Endothelial cell of umbilical vein (primary cell): ENCODE measurements at regions of chr15 and their contacts with region 1.

Region 1: GRCh38 chr15:70097337-70098169 is at the start of gene TLE3:
- DNase-seq: peak; percentile 99
- H3K4me3 ChIP-seq: peak within 1 kb of the TSS; percentile 88 to 98 (median 89)
- H3K27ac ChIP-seq: peak within 1 kb of the TSS; percentile 85
- H3K4me1 ChIP-seq: peaks cover 53% of the 10 kb centered on the region
- H3K27me3 ChIP-seq: no peaks in the 10 kb centered on the region
- CTCF ChIP-seq: peak in 1 of 2 donors; percentile 39
- POLR2A ChIP-seq: peak; percentile 88
- total RNA-seq, gene TLE3: 53.8 and 56.9 TPM in 2 replicates

Region 2: GRCh38 chr15:69462493-69463181 is 634.9 kb before region 1 on chr15:
- CTCF ChIA-PET with region 1: interaction called, 3 read pairs
- POLR2A ChIA-PET with region 1: no interaction called
- dilution Hi-C with region 1: no loop called
- intact Hi-C with region 1: loop called (anchors 5 kb)
- DNase-seq: peak; percentile 99
- H3K4me3 ChIP-seq: peak overlapping the region; percentile 1 to 38 (median 31)
- H3K27ac ChIP-seq: peak overlapping the region; percentile 65
- H3K4me1 ChIP-seq: peaks cover 8% of the 10 kb centered on the region
- H3K27me3 ChIP-seq: no peaks in the 10 kb centered on the region
- CTCF ChIP-seq: peak; percentile 94 to 97
- POLR2A ChIP-seq: peak; percentile 80

Region 3: GRCh38 chr15:69603369-69604071 is 494.0 kb before region 1 on chr15:
- CTCF ChIA-PET with region 1: no interaction called
- POLR2A ChIA-PET with region 1: interaction called, 11 read pairs
- dilution Hi-C with region 1: no loop called
- intact Hi-C with region 1: no loop called
- DNase-seq: no peak
- H3K4me3 ChIP-seq: no peak overlapping the region
- H3K27ac ChIP-seq: no peak overlapping the region
- H3K4me1 ChIP-seq: no peaks in the 10 kb centered on the region
- H3K27me3 ChIP-seq: no peaks in the 10 kb centered on the region
- CTCF ChIP-seq: no peak
- POLR2A ChIP-seq: no peak

Region 4: GRCh38 chr15:70062321-70062956 is 35.1 kb before region 1 on chr15:
- CTCF ChIA-PET with region 1: interaction called, 5 read pairs
- POLR2A ChIA-PET with region 1: interaction called, 3 read pairs
- dilution Hi-C with region 1: no loop called
- intact Hi-C with region 1: loop called (anchors 1 kb)
- DNase-seq: peak; percentile 60
- H3K4me3 ChIP-seq: no peak overlapping the region
- H3K27ac ChIP-seq: no peak overlapping the region
- H3K4me1 ChIP-seq: peaks cover 6% of the 10 kb centered on the region
- H3K27me3 ChIP-seq: no peaks in the 10 kb centered on the region
- CTCF ChIP-seq: no peak
- POLR2A ChIP-seq: no peak

Region 5: GRCh38 chr15:70152070-70152480 is 54.5 kb after region 1 on chr15:
- CTCF ChIA-PET with region 1: interaction called, 4 read pairs
- POLR2A ChIA-PET with region 1: no interaction called
- dilution Hi-C with region 1: no loop called
- intact Hi-C with region 1: loop called (anchors 2 kb)
- DNase-seq: peak; percentile 92
- H3K4me3 ChIP-seq: no peak overlapping the region
- H3K27ac ChIP-seq: no peak overlapping the region
- H3K4me1 ChIP-seq: peaks cover 7% of the 10 kb centered on the region
- H3K27me3 ChIP-seq: peaks cover 0 to 4% of the 10 kb centered on the region in 2 experiments
- CTCF ChIP-seq: no peak
- POLR2A ChIP-seq: no peak

Region 6: GRCh38 chr15:70362886-70363285 is 265.3 kb after region 1 on chr15:
- CTCF ChIA-PET with region 1: interaction called, 22 read pairs
- POLR2A ChIA-PET with region 1: interaction called, 3 read pairs
- dilution Hi-C with region 1: no loop called
- intact Hi-C with region 1: loop called (anchors 1 kb)
- DNase-seq: peak; percentile 38
- H3K4me3 ChIP-seq: no peak overlapping the region
- H3K27ac ChIP-seq: no peak overlapping the region
- H3K4me1 ChIP-seq: no peaks in the 10 kb centered on the region
- H3K27me3 ChIP-seq: no peaks in the 10 kb centered on the region
- CTCF ChIP-seq: peak; percentile 55 to 87
- POLR2A ChIP-seq: no peak

Region 7: GRCh38 chr15:70763120-70763878 is 665.7 kb after region 1 on chr15 and contains the start of gene UACA:
- CTCF ChIA-PET with region 1: no interaction called
- POLR2A ChIA-PET with region 1: no interaction called
- dilution Hi-C with region 1: no loop called
- intact Hi-C with region 1: loop called (anchors 2 kb)
- DNase-seq: peak; percentile 99
- H3K4me3 ChIP-seq: peak within 1 kb of the TSS; percentile 71 to 90 (median 89)
- H3K27ac ChIP-seq: peak within 1 kb of the TSS; percentile 83
- H3K4me1 ChIP-seq: peaks cover 32% of the 10 kb centered on the region
- H3K27me3 ChIP-seq: no peaks in the 10 kb centered on the region
- CTCF ChIP-seq: no peak
- POLR2A ChIP-seq: peak; percentile 91
- total RNA-seq, gene UACA: 270 and 292 TPM in 2 replicates